Activated B cell treated with CpG ODN at 0.5 μM for 24 hours (primary cell): ENCODE measurements at regions of chr11 and their contacts with region 1.

Region 1: GRCh38 chr11:128630367-128631230 is 43.2 kb upstream of the ETS1 start:
- DNase-seq: peak; percentile 86
- ATAC-seq: peak; percentile 85
- H3K4me3 Mint-ChIP-seq: peak overlapping the region; percentile 50
- H3K27ac Mint-ChIP-seq: peak overlapping the region; percentile 92
- H3K4me1 Mint-ChIP-seq: peaks cover 68% of the 10 kb centered on the region
- H3K27me3 Mint-ChIP-seq: no peaks in the 10 kb centered on the region
- CTCF ChIP-seq: no peak

Region 2: GRCh38 chr11:128290106-128290840 is 340.3 kb before region 1 on chr11:
- CTCF ChIA-PET with region 1: interaction called, 190 read pairs
- POLR2A ChIA-PET with region 1: interaction called, 123 read pairs
- intact Hi-C with region 1: loop called (anchors 1 kb)
- DNase-seq: peak; percentile 67
- ATAC-seq: peak; percentile 75
- H3K4me3 Mint-ChIP-seq: peak overlapping the region; percentile 85
- H3K27ac Mint-ChIP-seq: peak overlapping the region; percentile 99
- H3K4me1 Mint-ChIP-seq: peaks cover 97% of the 10 kb centered on the region
- H3K27me3 Mint-ChIP-seq: no peaks in the 10 kb centered on the region
- CTCF ChIP-seq: no peak

Region 3: GRCh38 chr11:128497061-128497775 is 133.4 kb before region 1 on chr11:
- CTCF ChIA-PET with region 1: interaction called, 10 read pairs
- POLR2A ChIA-PET with region 1: interaction called, 15 read pairs
- intact Hi-C with region 1: loop called (anchors 1 kb)
- DNase-seq: peak; percentile 43
- ATAC-seq: peak; percentile 92
- H3K4me3 Mint-ChIP-seq: peak overlapping the region; percentile 78
- H3K27ac Mint-ChIP-seq: peak overlapping the region; percentile 93
- H3K4me1 Mint-ChIP-seq: peaks cover 98% of the 10 kb centered on the region
- H3K27me3 Mint-ChIP-seq: no peaks in the 10 kb centered on the region
- CTCF ChIP-seq: no peak

Region 4: GRCh38 chr11:128595221-128595620 is 35.4 kb before region 1 on chr11:
- CTCF ChIA-PET with region 1: interaction called, 6 read pairs
- POLR2A ChIA-PET with region 1: interaction called, 11 read pairs
- intact Hi-C with region 1: no loop called
- DNase-seq: no peak
- ATAC-seq: no peak
- H3K4me3 Mint-ChIP-seq: no peak overlapping the region
- H3K27ac Mint-ChIP-seq: peak overlapping the region; percentile 75
- H3K4me1 Mint-ChIP-seq: peaks cover 52% of the 10 kb centered on the region
- H3K27me3 Mint-ChIP-seq: no peaks in the 10 kb centered on the region
- CTCF ChIP-seq: no peak

Region 5: GRCh38 chr11:128757235-128757711 is 126.7 kb after region 1 on chr11:
- CTCF ChIA-PET with region 1: interaction called, 156 read pairs
- POLR2A ChIA-PET with region 1: interaction called, 24 read pairs
- intact Hi-C with region 1: loop called (anchors 1 kb)
- DNase-seq: peak; percentile 41
- ATAC-seq: peak; percentile 79
- H3K4me3 Mint-ChIP-seq: peak overlapping the region; percentile 66
- H3K27ac Mint-ChIP-seq: peak overlapping the region; percentile 91
- H3K4me1 Mint-ChIP-seq: peaks cover 80% of the 10 kb centered on the region
- H3K27me3 Mint-ChIP-seq: no peaks in the 10 kb centered on the region
- CTCF ChIP-seq: peak; percentile 81

Region 6: DNA sequence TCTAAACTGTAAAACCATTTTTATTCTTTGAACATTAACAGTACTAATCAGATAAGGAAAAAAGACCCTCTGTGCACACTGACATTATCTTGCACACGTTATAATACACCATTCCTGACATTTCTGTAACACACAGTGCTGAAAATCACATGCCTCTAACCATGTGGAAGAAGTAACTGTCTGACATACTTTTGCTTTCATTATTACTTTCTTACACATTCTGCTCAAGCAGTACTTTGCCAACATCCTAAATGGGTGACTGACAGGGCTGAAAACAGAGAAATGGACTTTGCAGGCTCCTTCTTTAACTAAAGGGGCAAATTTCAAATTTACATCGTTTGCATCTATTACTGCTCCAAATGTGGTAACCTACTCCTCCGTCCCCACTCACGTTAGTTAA is 334.9 kb after region 1 on chr11:
- CTCF ChIA-PET with region 1: no interaction called
- POLR2A ChIA-PET with region 1: no interaction called
- intact Hi-C with region 1: loop called (anchors 10 kb)
- DNase-seq: no peak
- ATAC-seq: peak; percentile 86
- H3K4me3 Mint-ChIP-seq: peak overlapping the region; percentile 8
- H3K27ac Mint-ChIP-seq: no peak overlapping the region
- H3K4me1 Mint-ChIP-seq: peaks cover 13% of the 10 kb centered on the region
- H3K27me3 Mint-ChIP-seq: no peaks in the 10 kb centered on the region
- CTCF ChIP-seq: no peak